HepG2 (cell line): ENCODE measurements at regions of chr15 and their contacts with region 1.

Region 1: DNA sequence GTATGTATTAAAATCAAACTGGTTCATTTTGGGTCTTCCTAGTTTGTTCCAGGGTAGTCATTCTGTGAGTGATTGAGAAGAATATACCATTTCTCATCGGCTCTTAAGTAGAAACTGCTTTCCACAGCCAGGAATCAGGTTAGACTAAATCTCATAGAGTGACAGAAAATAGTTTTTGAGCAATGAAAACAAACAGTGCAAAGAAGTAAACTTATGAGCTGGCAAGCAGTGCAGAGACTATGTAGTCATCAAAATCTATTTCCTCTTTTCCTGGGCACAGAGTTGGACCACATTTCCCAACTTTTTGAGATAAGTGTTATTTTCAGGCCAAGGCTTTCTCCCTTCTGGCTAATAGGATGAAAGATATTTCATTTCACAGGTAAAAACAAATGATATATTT is 66.5 kb downstream of the UBE3A start:
- DNase-seq: no peak
- ATAC-seq: no peak
- H3K4me3 ChIP-seq: no peak overlapping the region
- H3K27ac ChIP-seq: no peak overlapping the region
- H3K4me1 ChIP-seq: peaks cover 17% of the 10 kb centered on the region
- H3K27me3 ChIP-seq: no peaks in the 10 kb centered on the region
- CTCF ChIP-seq: no peak
- EP300 ChIP-seq: no peak
- POLR2A ChIP-seq: no peak
- RAD21 ChIP-seq: no peak

Region 2: GRCh38 chr15:23565395-23566070 is 1806.8 kb before region 1 on chr15 and contains the start of gene MKRN3:
- CTCF ChIA-PET with region 1: no interaction called
- POLR2A ChIA-PET with region 1: no interaction called
- in situ Hi-C with region 1: no loop called
- intact Hi-C with region 1: loop called (anchors 5 kb)
- DNase-seq: peak; percentile 44
- ATAC-seq: peak; percentile 71
- H3K4me3 ChIP-seq: peak within 1 kb of the TSS; percentile 60 to 76 (median 65)
- H3K27ac ChIP-seq: peak within 1 kb of the TSS; percentile 85
- H3K4me1 ChIP-seq: peaks cover 12% of the 10 kb centered on the region
- H3K27me3 ChIP-seq: no peaks in the 10 kb centered on the region; a peak in 1 of 5 replicates
- CTCF ChIP-seq: no peak
- EP300 ChIP-seq: no peak
- POLR2A ChIP-seq: peak in 1 of 2 experiments; percentile 39; a peak in 1 of 4 replicates
- RAD21 ChIP-seq: no peak
- total RNA-seq, gene MKRN3: 4.6 and 5.2 TPM in 2 replicates

Region 3: GRCh38 chr15:25410649-25411048 is 38.4 kb after region 1 on chr15:
- CTCF ChIA-PET with region 1: no interaction called
- POLR2A ChIA-PET with region 1: no interaction called
- in situ Hi-C with region 1: no loop called
- intact Hi-C with region 1: no loop called
- DNase-seq: no peak
- ATAC-seq: no peak
- H3K4me3 ChIP-seq: no peak overlapping the region
- H3K27ac ChIP-seq: no peak overlapping the region
- H3K4me1 ChIP-seq: peaks cover 5% of the 10 kb centered on the region; the same call in 1 of the 2 replicates
- H3K27me3 ChIP-seq: no peaks in the 10 kb centered on the region
- CTCF ChIP-seq: no peak
- EP300 ChIP-seq: no peak
- POLR2A ChIP-seq: no peak
- RAD21 ChIP-seq: no peak

Region 4: DNA sequence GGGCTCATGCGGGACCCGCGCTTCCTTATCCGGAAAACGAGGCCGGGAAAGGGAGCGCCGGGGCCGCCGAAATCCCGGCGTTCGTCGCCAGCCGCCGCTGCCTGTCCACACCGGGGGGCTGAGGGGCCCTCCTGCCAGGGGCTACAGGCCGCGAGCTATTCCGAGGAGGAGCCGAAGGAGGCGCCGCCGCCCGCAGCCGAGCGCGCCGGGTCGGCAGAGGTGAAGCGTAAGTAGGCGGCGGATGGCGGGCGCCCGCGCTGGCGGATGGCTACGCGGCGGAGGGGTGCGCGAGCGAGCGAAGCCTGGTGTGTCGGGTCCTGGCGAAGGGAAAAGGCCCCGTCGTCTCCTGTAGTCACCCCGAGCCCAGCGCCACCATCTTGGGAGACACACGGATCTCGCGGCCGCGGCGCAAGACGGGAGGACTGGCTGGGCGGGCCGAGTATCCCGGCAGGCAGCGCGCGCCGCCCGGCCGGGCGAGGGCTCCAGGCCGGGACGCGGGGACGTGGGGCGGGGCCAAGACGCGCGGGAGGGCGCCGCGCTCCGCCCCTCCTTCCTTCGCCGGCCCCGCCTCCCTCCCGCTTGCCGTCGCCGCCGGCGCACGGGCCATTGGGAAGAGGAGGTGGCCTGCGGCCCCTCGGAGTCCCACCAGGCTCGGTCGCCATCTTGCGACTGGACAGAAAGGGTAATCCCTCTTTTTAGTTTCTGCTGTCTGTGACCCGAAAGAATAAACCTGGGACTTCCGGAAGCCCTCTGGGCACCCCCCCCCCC is 66.5 kb after region 1 on chr15 and contains the start of gene UBE3A:
- CTCF ChIA-PET with region 1: no interaction called
- POLR2A ChIA-PET with region 1: no interaction called
- in situ Hi-C with region 1: loop called (anchors 10 kb)
- intact Hi-C with region 1: loop called (anchors 10 kb)
- DNase-seq: peak; percentile 78
- ATAC-seq: peak; percentile 93
- H3K4me3 ChIP-seq: peak within 1 kb of the TSS; percentile 95 to 98 (median 95)
- H3K27ac ChIP-seq: peak within 1 kb of the TSS; percentile 99
- H3K4me1 ChIP-seq: peaks cover 35% of the 10 kb centered on the region
- H3K27me3 ChIP-seq: no peaks in the 10 kb centered on the region
- CTCF ChIP-seq: peak; percentile 55
- EP300 ChIP-seq: no peak
- POLR2A ChIP-seq: peak; percentile 84 to 94
- RAD21 ChIP-seq: no peak
- total RNA-seq, gene UBE3A: 77.8 and 80.5 TPM in 2 replicates